ENCODE measurements at regions of chr16 and their contacts with region 1.

Region 1: DNA sequence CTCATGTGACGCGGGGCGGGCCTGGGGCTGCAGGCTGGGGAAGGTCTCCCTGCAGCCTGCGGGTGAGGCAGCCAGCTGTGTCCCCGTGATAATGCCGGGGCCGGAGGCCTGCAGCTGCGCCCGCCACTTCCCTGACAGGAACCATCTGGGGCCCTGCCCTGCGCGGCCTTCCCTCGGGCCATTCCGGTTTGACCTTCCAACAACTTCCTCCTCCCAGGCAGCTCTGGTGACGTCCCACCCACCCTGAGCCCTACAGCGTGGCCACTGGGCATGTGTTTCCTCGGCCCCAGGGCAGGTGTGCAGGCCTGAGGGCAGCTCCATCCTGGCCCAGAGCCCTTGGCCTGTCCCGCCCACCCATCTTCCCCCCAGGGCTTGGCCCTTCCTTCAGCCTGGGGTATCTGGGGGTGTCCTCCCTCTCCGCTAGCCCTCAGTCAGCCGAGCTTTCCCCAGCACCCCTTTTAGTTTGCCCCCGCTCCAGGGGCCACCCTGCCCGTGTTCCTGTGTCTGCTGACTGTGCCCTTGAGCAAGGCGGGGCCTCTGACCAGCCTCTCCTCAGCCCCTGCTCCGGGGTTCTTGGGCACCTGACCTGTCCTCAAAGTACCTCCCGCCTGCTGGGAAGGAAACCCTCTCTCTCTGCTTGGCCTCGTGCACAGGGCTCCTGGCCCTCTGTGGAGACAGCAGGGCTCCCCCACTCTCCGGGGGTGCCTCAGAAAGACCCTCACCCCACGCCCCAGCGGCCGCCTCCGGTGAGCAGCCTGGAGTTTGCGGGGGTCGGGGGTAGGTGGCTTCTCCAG is at the start of gene CBFA2T3:
- DNase-seq: peak; percentile 79
- H3K4me3 ChIP-seq: peak within 1 kb of the TSS; percentile 60
- H3K27ac ChIP-seq: peak within 1 kb of the TSS; percentile 91
- H3K4me1 ChIP-seq: peaks cover 89% of the 10 kb centered on the region
- CTCF ChIP-seq: no peak
- total RNA-seq, gene CBFA2T3: 1.1 and 2.2 TPM in 2 replicates

Region 2: GRCh38 chr16:88993166-88993761 is 16.0 kb after region 1 on chr16:
- CTCF ChIA-PET with region 1: interaction called, 5 read pairs
- POLR2A ChIA-PET with region 1: interaction called, 22 read pairs
- intact Hi-C with region 1: loop called (anchors 1 kb)
- DNase-seq: peak; percentile 67
- H3K4me3 ChIP-seq: peak overlapping the region; percentile 43
- H3K27ac ChIP-seq: peak overlapping the region; percentile 99
- H3K4me1 ChIP-seq: peaks cover 42% of the 10 kb centered on the region
- CTCF ChIP-seq: no peak

Measured in OCI-LY7 (cell line).